Mammary epithelial cell (primary cell): ENCODE measurements at regions of chr11 and their contacts with region 1.

Region 1: GRCh38 chr11:83734120-83734519 is 448.0 kb upstream of the CCDC90B start:
- DNase-seq: no peak
- H3K4me3 ChIP-seq: no peak overlapping the region
- H3K27ac ChIP-seq: no peak overlapping the region
- H3K4me1 ChIP-seq: no peaks in the 10 kb centered on the region
- H3K27me3 ChIP-seq: peaks cover 3% of the 10 kb centered on the region
- CTCF ChIP-seq: no peak

Region 2: GRCh38 chr11:83691451-83691950 is 42.6 kb before region 1 on chr11:
- CTCF ChIA-PET with region 1: no interaction called
- dilution Hi-C with region 1: loop called (anchors 5 kb)
- in situ Hi-C with region 1: no loop called
- intact Hi-C with region 1: no loop called
- DNase-seq: no peak
- H3K4me3 ChIP-seq: no peak overlapping the region
- H3K27ac ChIP-seq: no peak overlapping the region
- H3K4me1 ChIP-seq: peaks cover 16% of the 10 kb centered on the region
- H3K27me3 ChIP-seq: no peaks in the 10 kb centered on the region
- CTCF ChIP-seq: no peak

Region 3: GRCh38 chr11:84130646-84131420 is 396.7 kb after region 1 on chr11:
- CTCF ChIA-PET with region 1: no interaction called
- dilution Hi-C with region 1: no loop called
- in situ Hi-C with region 1: no loop called
- intact Hi-C with region 1: no loop called
- DNase-seq: no peak
- H3K4me3 ChIP-seq: no peak overlapping the region
- H3K27ac ChIP-seq: no peak overlapping the region
- H3K4me1 ChIP-seq: no peaks in the 10 kb centered on the region
- H3K27me3 ChIP-seq: no peaks in the 10 kb centered on the region
- CTCF ChIP-seq: no peak